ENCODE measurements at regions of chr1 and their contacts with region 1.

Region 1: GRCh38 chr1:227805606-227806197 is 9.8 kb upstream of the PRSS38 start:
- DNase-seq: peak; percentile 100
- ATAC-seq: peak; percentile 99
- H3K4me3 ChIP-seq: no peak overlapping the region
- H3K27ac ChIP-seq: peak overlapping the region; percentile 81
- H3K4me1 ChIP-seq: peaks cover 20% of the 10 kb centered on the region
- H3K27me3 ChIP-seq: no peaks in the 10 kb centered on the region
- CTCF ChIP-seq: peak; percentile 79

Region 2: DNA sequence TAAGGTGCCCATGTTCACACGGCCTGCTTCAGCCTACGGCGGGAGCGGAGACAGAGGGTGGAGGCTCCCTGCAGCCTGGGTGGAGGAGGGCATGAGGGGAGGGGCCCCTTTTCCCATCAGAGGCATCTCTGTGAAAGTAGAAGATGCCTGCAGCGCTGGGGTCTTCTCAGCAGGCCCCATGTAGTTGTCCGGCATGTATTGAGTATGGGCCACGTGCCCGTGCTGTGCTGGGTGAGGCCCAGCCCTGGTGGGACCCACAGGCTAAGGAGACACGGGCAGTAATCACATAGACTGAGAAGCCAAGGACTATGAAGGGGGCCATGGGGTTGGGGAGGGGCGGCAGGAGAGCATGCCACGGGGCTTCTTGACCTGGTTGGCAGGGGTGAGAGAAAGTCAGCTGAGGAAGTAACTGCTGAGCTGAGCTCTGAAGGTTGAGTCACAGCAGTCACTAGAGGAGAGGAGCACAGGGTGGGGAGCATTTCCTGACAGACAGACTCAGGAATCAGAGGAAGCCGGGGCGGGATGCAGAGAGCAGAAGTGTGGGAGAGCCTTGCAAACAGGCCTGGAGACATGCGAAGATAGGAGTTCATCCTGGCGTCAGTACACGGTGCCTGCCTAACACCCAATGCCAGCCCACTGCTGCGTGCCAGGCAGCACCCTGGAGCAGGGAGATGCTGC is 913.7 kb before region 1 on chr1:
- CTCF ChIA-PET with region 1: no interaction called
- POLR2A ChIA-PET with region 1: no interaction called
- intact Hi-C with region 1: no loop called
- DNase-seq: no peak
- ATAC-seq: peak; percentile 27
- H3K4me3 ChIP-seq: no peak overlapping the region
- H3K27ac ChIP-seq: no peak overlapping the region
- H3K4me1 ChIP-seq: no peaks in the 10 kb centered on the region
- H3K27me3 ChIP-seq: no peaks in the 10 kb centered on the region
- CTCF ChIP-seq: no peak

Region 3: DNA sequence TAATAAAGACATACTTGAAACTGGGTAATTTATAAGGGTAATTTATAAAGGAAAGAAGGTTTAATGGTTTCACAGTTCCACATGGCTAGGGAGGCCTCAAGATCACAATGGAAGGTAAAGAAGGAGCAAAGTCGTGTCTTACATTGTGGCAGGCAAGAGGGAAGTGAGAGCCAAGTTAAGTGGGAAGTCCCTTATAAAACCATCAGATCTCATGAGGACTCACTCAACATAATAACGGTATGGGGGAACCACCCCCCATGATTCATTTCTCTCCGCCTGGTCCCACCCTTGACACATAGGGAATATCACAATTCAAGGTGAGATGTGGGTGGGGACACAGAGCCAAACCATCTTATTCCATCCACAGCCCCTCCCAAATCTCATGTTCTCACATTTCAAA is 319.1 kb before region 1 on chr1:
- CTCF ChIA-PET with region 1: no interaction called
- POLR2A ChIA-PET with region 1: no interaction called
- intact Hi-C with region 1: loop called (anchors 5 kb)
- DNase-seq: no peak
- ATAC-seq: no peak
- H3K4me3 ChIP-seq: no peak overlapping the region
- H3K27ac ChIP-seq: no peak overlapping the region
- H3K4me1 ChIP-seq: no peaks in the 10 kb centered on the region
- H3K27me3 ChIP-seq: 0 out of 2 replicates have a peak, but pooled peaks cover 6% of the 10 kb centered on the region
- CTCF ChIP-seq: no peak

Region 4: DNA sequence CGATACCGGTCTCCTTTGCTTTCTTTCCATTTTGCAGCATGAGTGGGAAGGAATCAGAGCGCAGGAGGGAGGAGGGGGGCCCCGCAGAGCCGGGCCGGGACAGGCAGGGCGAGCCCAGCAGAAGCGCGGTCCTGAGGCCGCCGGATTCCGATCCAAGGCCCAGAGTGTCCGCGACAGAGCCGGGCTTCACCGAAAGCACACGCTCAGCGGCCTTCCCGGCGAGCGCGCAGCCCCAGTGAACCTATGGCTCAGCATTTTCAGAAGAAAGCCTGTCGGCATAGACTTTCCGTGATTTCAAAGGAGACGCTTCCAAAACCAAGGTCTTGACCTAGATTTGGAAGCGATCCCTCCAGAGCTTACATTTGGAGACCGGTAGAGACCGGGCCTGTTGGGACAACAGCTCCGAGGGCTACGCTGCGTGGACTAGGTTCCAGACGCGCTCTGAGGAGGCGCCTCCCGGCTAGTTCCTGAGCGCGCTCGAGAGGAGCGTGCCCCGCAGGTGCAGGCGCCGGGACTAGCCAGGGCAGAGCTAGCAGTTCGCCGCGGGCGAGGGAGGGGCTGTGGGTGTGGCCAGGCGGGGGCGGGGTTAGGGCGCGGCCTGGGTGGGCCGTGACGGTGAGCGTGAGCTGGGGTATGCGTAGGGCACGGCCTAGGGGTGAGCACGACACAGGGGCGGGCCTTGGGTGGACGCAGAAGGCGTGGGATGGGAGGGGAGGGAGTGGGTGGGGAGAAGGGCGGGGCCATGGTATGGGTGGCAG is 18.0 kb before region 1 on chr1:
- CTCF ChIA-PET with region 1: no interaction called
- POLR2A ChIA-PET with region 1: no interaction called
- intact Hi-C with region 1: loop called (anchors 1 kb)
- DNase-seq: peak; percentile 100
- ATAC-seq: peak; percentile 84
- H3K4me3 ChIP-seq: peak overlapping the region; percentile 67
- H3K27ac ChIP-seq: no peak overlapping the region
- H3K4me1 ChIP-seq: peaks cover 18% of the 10 kb centered on the region
- H3K27me3 ChIP-seq: no peaks in the 10 kb centered on the region
- CTCF ChIP-seq: no peak

Region 5: GRCh38 chr1:227886993-227887696 is 81.4 kb after region 1 on chr1:
- CTCF ChIA-PET with region 1: no interaction called
- POLR2A ChIA-PET with region 1: no interaction called
- intact Hi-C with region 1: loop called (anchors 5 kb)
- DNase-seq: no peak
- ATAC-seq: no peak
- H3K4me3 ChIP-seq: no peak overlapping the region
- H3K27ac ChIP-seq: no peak overlapping the region
- H3K4me1 ChIP-seq: peaks cover 16% of the 10 kb centered on the region
- H3K27me3 ChIP-seq: no peaks in the 10 kb centered on the region
- CTCF ChIP-seq: no peak

Region 6: DNA sequence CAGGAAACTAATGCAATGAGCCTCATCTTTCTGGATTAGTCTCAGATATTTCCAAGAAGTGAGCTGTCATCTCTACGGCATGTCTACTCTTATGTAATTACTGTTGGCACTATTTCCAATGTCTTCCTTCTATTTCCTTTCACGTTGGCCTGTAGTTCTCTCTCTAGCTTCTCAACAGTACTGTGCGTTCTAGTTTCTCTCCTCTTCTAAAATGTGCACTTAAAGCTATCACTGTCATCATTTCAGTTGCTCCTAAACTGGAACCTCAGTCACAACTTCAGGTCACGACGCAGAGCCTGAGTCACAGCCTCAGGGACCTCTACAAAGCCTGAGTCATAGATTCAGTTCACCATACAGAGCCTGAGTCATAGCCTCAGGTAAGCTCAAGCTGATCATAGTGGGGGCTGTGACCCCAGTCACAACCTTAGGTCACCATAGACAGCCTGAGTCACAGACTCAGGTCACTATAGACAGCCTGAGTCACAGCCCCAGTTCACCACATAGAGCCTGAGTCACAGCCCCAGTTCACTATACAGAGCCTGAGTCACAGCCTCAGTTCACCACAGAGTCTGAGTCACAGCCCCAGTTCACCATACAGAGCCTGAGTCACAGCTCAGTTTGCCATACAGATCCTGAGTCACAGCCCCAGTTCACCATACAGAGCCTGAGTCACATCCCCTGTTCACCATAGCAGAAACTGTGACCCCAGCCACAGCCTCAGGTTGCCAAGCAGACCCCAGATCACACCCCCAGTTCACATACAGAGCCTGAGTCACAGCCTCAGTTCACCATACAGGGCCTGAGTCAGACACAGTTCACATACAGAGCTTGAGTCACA is 129.0 kb after region 1 on chr1:
- CTCF ChIA-PET with region 1: interaction called, 8 read pairs
- POLR2A ChIA-PET with region 1: interaction called, 4 read pairs
- intact Hi-C with region 1: loop called (anchors 1 kb)
- DNase-seq: peak; percentile 100
- ATAC-seq: peak; percentile 87
- H3K4me3 ChIP-seq: peak overlapping the region; percentile 25
- H3K27ac ChIP-seq: peak overlapping the region; percentile 94
- H3K4me1 ChIP-seq: peaks cover 49% of the 10 kb centered on the region
- H3K27me3 ChIP-seq: no peaks in the 10 kb centered on the region
- CTCF ChIP-seq: no peak

Measured in PC-3 (cell line).